Activated B cell treated with CpG ODN at 0.5 μM for 24 hours (primary cell): ENCODE measurements at regions of chr2 and their contacts with region 1.

Region 1: GRCh38 chr2:88561646-88562388 is 65.4 kb downstream of the EIF2AK3 start:
- DNase-seq: no peak
- ATAC-seq: no peak
- H3K4me3 Mint-ChIP-seq: no peak overlapping the region
- H3K27ac Mint-ChIP-seq: no peak overlapping the region
- H3K4me1 Mint-ChIP-seq: peaks cover 20% of the 10 kb centered on the region
- H3K27me3 Mint-ChIP-seq: no peaks in the 10 kb centered on the region
- CTCF ChIP-seq: no peak

Region 2: DNA sequence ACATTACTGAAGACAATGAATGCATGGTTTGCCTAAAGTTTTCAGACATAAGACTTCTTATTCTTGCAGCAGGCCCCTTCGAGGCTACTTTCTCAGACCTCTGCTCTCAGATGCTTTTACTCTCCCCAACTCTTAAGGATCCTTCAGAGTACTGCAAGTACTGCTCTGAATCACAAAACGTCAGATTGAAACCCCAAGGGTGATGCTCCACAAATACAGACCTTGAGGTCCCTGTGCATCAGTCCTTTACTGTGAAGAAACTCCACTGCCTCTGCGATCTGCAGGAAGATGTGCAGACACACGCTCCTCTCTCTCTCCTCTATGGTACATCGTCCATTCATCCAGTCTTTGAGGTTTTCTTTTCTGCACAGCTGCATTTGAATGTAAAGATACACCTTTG is 12.6 kb after region 1 on chr2:
- CTCF ChIA-PET with region 1: no interaction called
- POLR2A ChIA-PET with region 1: no interaction called
- intact Hi-C with region 1: loop called (anchors 2 kb)
- DNase-seq: no peak
- ATAC-seq: no peak
- H3K4me3 Mint-ChIP-seq: no peak overlapping the region
- H3K27ac Mint-ChIP-seq: no peak overlapping the region
- H3K4me1 Mint-ChIP-seq: peaks cover 3% of the 10 kb centered on the region
- H3K27me3 Mint-ChIP-seq: no peaks in the 10 kb centered on the region
- CTCF ChIP-seq: no peak